ENCODE measurements at regions of chr11 and their contacts with region 1.

Region 1: GRCh38 chr11:73335204-73335923 is 27.3 kb downstream of the ARHGEF17 start:
- DNase-seq: peak; percentile 77
- H3K4me3 ChIP-seq: no peak overlapping the region
- H3K27ac ChIP-seq: no peak overlapping the region
- H3K4me1 ChIP-seq: peaks cover 13% of the 10 kb centered on the region
- CTCF ChIP-seq: peak; percentile 99

Region 2: GRCh38 chr11:73295231-73295995 is 40.0 kb before region 1 on chr11:
- CTCF ChIA-PET with region 1: interaction called, 4 read pairs
- POLR2A ChIA-PET with region 1: no interaction called
- intact Hi-C with region 1: loop called (anchors 1 kb)
- DNase-seq: peak; percentile 80
- H3K4me3 ChIP-seq: no peak overlapping the region
- H3K27ac ChIP-seq: no peak overlapping the region
- H3K4me1 ChIP-seq: no peaks in the 10 kb centered on the region
- CTCF ChIP-seq: peak; percentile 99

Region 3: GRCh38 chr11:73307323-73308002 is 27.9 kb before region 1 on chr11:
- CTCF ChIA-PET with region 1: interaction called, 17 read pairs
- POLR2A ChIA-PET with region 1: interaction called, 4 read pairs
- intact Hi-C with region 1: loop called (anchors 1 kb)
- DNase-seq: peak; percentile 93
- H3K4me3 ChIP-seq: peak overlapping the region; percentile 72
- H3K27ac ChIP-seq: peak overlapping the region; percentile 16
- H3K4me1 ChIP-seq: peaks cover 14% of the 10 kb centered on the region
- CTCF ChIP-seq: peak; percentile 97

Region 4: GRCh38 chr11:74024261-74025029 is 689.1 kb after region 1 on chr11:
- CTCF ChIA-PET with region 1: no interaction called
- POLR2A ChIA-PET with region 1: no interaction called
- intact Hi-C with region 1: no loop called
- DNase-seq: no peak
- H3K4me3 ChIP-seq: no peak overlapping the region
- H3K27ac ChIP-seq: no peak overlapping the region
- H3K4me1 ChIP-seq: peaks cover 18% of the 10 kb centered on the region
- CTCF ChIP-seq: no peak